BJ (cell line): ENCODE measurements at regions of chr6 and their contacts with region 1.

Region 1: DNA sequence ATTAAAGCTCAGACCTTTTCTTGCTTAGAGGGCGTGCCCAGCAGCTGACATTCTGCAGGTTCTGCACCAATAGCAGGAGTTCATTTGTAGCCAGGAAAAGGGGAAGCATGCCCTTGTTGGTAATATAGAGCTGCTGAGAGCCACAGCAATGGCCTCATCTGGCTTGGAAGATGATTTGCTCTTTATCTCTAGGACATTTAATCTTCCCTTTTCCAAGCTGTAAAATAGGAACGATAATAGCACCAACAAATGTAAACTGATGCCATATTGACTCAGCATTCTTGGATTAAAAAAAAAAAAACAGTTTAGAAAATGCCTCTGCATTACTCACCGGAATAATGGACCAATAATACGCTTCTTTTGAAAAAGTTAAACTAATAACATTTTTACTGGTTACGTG is 93.4 kb upstream of the SLC2A12 start:
- DNase-seq: peak; percentile 51
- H3K4me3 ChIP-seq: no peak overlapping the region
- H3K27me3 ChIP-seq: no peaks in the 10 kb centered on the region
- CTCF ChIP-seq: no peak

Region 2: DNA sequence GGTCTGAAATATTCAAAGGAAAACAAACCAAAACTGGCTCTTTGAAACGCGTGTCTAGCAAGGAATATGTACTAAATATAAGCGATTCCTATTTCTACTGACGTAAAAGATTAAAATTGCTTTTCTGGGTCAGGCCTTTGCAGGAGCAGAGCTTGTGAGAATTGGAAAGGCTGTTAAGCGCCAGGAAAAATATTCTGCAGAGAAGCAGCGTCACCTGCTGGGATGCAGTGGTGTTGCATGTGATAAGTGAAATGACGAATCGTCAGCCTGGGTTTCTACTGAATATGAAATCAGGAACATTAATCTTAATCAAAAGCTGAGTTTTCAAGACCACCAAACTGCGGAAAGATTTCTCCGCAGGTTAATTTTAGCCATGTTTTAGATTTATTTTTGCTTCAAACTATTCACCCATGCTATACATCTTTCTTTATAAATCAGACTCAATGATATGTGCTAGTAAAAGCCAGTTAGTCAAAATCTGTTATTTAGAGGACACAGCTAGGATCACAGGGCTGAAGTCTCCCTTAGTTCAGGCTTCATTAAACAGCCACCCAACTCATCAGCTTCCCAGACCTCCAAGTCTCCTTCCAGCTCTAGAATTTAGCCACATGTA is 736.7 kb after region 1 on chr6:
- CTCF ChIA-PET with region 1: interaction called, 10 read pairs
- POLR2A ChIA-PET with region 1: interaction called, 7 read pairs
- DNase-seq: no peak
- H3K4me3 ChIP-seq: no peak overlapping the region
- H3K27me3 ChIP-seq: no peaks in the 10 kb centered on the region
- CTCF ChIP-seq: peak; percentile 83